GM12878 (cell line): ENCODE measurements at regions of chr5 and their contacts with region 1.

Region 1: DNA sequence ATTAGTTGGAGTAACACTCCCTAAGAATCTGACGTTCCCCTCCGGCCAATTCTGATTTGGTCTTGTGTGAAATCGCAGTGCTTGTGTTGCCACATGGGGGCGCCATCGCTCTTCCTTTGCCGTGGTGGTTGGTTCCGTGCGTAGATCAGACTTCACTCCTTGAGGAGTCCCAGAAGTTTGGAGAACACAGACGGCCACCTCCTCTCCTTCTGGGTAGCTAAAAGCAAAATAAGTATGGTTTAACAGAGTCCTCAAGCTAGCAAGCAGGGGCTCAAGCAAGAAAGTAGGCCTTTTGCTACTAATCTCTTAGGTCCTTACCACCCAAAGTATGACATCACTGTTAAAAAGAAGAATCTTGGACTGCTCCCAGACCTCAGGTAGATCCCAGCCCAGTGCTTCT is 59.5 kb downstream of the HSPA4 start:
- DNase-seq: peak; percentile 45
- ATAC-seq: peak; percentile 84
- H3K4me3 ChIP-seq: no peak overlapping the region
- H3K27ac ChIP-seq: no peak overlapping the region
- H3K4me1 ChIP-seq: peaks cover 14% of the 10 kb centered on the region
- H3K27me3 ChIP-seq: no peaks in the 10 kb centered on the region
- CTCF ChIP-seq: peak; percentile 88 to 99 (median 92); a peak in 5 of 6 replicates
- EP300 ChIP-seq: no peak
- POLR2A ChIP-seq: no peak
- RAD21 ChIP-seq: peak; percentile 99

Region 2: GRCh38 chr5:133041910-133042309 is 69.4 kb before region 1 on chr5:
- CTCF ChIA-PET with region 1: no interaction called
- POLR2A ChIA-PET with region 1: no interaction called
- RAD21 ChIA-PET with region 1: no interaction called
- SMC1A ChIA-PET with region 1: no interaction called
- in situ Hi-C with region 1: no loop called
- intact Hi-C with region 1: no loop called
- DNase-seq: no peak
- ATAC-seq: no peak
- H3K4me3 ChIP-seq: no peak overlapping the region
- H3K27ac ChIP-seq: no peak overlapping the region
- H3K4me1 ChIP-seq: no peaks in the 10 kb centered on the region
- H3K27me3 ChIP-seq: no peaks in the 10 kb centered on the region
- CTCF ChIP-seq: no peak
- EP300 ChIP-seq: no peak
- POLR2A ChIP-seq: no peak
- RAD21 ChIP-seq: no peak

Region 3: DNA sequence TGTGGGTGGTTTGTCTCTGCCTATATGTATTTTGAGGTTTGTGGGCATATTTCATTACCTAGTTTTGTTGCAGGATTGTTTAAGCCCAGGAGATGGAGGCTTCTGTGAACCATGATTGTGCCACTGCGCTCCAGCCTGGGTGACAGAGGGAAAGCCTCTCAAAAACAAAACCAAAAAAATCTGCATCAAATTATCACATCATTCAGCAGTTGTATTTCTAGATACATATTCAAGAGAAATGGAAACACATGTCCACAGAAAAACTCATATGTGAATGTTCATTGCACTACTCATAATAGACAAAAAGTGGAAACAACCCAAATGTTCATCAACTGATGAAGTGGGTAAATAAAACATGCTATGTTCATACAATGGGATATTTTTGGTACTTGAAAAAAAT is 29.6 kb before region 1 on chr5:
- CTCF ChIA-PET with region 1: no interaction called
- POLR2A ChIA-PET with region 1: no interaction called
- RAD21 ChIA-PET with region 1: no interaction called
- SMC1A ChIA-PET with region 1: no interaction called
- in situ Hi-C with region 1: no loop called
- intact Hi-C with region 1: no loop called
- DNase-seq: no peak
- ATAC-seq: no peak
- H3K4me3 ChIP-seq: no peak overlapping the region
- H3K27ac ChIP-seq: no peak overlapping the region
- H3K4me1 ChIP-seq: no peaks in the 10 kb centered on the region
- H3K27me3 ChIP-seq: no peaks in the 10 kb centered on the region
- CTCF ChIP-seq: no peak
- EP300 ChIP-seq: no peak
- POLR2A ChIP-seq: no peak
- RAD21 ChIP-seq: no peak

Region 4: DNA sequence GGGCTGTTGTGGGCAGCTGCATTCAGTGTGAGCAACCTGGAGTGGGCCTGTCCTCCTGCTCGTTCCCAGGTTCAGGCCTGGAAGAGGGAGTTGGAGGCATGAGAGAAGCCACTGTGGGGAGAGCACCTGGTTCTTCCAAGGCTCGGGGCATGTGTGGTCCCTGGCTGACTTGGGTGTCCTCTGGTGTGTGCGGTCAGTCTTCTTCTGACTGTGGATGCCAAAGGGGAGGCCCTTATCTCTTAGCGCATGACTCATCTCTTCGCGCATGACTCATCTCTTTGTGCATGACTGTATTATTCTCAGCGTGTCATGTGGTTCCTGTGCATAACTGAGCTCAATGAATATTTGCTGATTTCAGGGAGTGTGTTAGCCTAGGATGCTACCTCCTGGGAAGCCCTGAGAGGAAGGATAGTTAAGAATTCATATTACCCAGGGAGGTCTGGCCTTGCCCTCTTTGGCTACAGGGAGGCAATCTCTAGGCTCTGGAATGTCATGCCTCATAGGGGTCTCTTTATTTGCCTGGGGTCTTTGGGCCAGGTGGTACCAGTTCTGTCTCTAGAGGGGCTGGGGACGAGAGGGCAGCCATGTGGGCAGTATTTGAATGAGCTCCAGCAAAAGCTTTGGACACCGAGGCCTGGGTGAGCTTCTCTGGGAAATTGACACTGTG is 129.3 kb after region 1 on chr5:
- CTCF ChIA-PET with region 1: interaction called, 9 read pairs
- POLR2A ChIA-PET with region 1: interaction called, 10 read pairs
- RAD21 ChIA-PET with region 1: interaction called, 7 read pairs
- SMC1A ChIA-PET with region 1: interaction called, 8 read pairs
- in situ Hi-C with region 1: no loop called
- intact Hi-C with region 1: loop called (anchors 5 kb)
- DNase-seq: peak; percentile 76
- ATAC-seq: peak; percentile 83
- H3K4me3 ChIP-seq: no peak overlapping the region
- H3K27ac ChIP-seq: peak overlapping the region; percentile 58
- H3K4me1 ChIP-seq: peaks cover 44% of the 10 kb centered on the region
- H3K27me3 ChIP-seq: no peaks in the 10 kb centered on the region
- CTCF ChIP-seq: no peak
- EP300 ChIP-seq: peak; percentile 82 to 94; a peak in 2 of 4 replicates
- POLR2A ChIP-seq: peak; percentile 41; the same call in 1 of the 2 replicates
- RAD21 ChIP-seq: no peak

Region 5: DNA sequence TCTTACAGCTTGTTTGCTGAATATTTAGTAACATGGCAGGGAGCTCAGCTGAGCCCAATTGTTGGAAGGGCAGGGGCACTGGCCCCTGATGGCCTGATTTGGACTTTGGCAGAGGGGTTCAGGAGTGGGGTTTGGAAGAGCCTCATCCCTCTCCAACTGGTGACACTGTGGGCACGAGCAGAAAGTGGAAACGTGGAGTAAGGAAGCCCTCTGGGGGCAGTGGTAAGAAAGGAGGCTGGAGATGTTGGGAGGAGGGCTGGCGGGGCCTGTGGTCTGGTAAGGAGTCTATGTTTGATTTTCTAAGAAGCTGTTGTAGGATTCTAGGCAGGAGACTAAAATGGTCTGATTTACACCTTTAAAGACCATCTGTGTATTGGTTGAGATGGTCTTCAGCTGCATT is 149.4 kb after region 1 on chr5:
- CTCF ChIA-PET with region 1: interaction called, 8 read pairs
- POLR2A ChIA-PET with region 1: no interaction called
- RAD21 ChIA-PET with region 1: interaction called, 5 read pairs
- SMC1A ChIA-PET with region 1: interaction called, 3 read pairs
- in situ Hi-C with region 1: no loop called
- intact Hi-C with region 1: loop called (anchors 5 kb)
- DNase-seq: no peak
- ATAC-seq: no peak
- H3K4me3 ChIP-seq: no peak overlapping the region
- H3K27ac ChIP-seq: no peak overlapping the region
- H3K4me1 ChIP-seq: 0 out of 2 replicates have a peak, but pooled peaks cover 2% of the 10 kb centered on the region
- H3K27me3 ChIP-seq: no peaks in the 10 kb centered on the region
- CTCF ChIP-seq: peak in 2 of 3 experiments; percentile 2 to 26; a peak in 1 of 6 replicates
- EP300 ChIP-seq: no peak
- POLR2A ChIP-seq: no peak
- RAD21 ChIP-seq: peak; percentile 52

Region 6: GRCh38 chr5:133321833-133322420 is 210.6 kb after region 1 on chr5:
- CTCF ChIA-PET with region 1: interaction called, 3 read pairs
- POLR2A ChIA-PET with region 1: no interaction called
- RAD21 ChIA-PET with region 1: interaction called, 6 read pairs
- SMC1A ChIA-PET with region 1: interaction called, 10 read pairs
- in situ Hi-C with region 1: no loop called
- intact Hi-C with region 1: no loop called
- DNase-seq: peak; percentile 79
- ATAC-seq: peak; percentile 86
- H3K4me3 ChIP-seq: no peak overlapping the region
- H3K27ac ChIP-seq: peak overlapping the region; percentile 63
- H3K4me1 ChIP-seq: peaks cover 34% of the 10 kb centered on the region
- H3K27me3 ChIP-seq: no peaks in the 10 kb centered on the region
- CTCF ChIP-seq: no peak
- EP300 ChIP-seq: peak in 1 of 2 experiments; percentile 84; a peak in 3 of 4 replicates
- POLR2A ChIP-seq: no peak
- RAD21 ChIP-seq: no peak

Region 7: GRCh38 chr5:133423618-133424282 is 312.5 kb after region 1 on chr5:
- CTCF ChIA-PET with region 1: interaction called, 18 read pairs
- POLR2A ChIA-PET with region 1: no interaction called
- RAD21 ChIA-PET with region 1: interaction called, 5 read pairs
- SMC1A ChIA-PET with region 1: interaction called, 7 read pairs
- in situ Hi-C with region 1: no loop called
- intact Hi-C with region 1: loop called (anchors 5 kb)
- DNase-seq: peak; percentile 16
- ATAC-seq: peak; percentile 92
- H3K4me3 ChIP-seq: no peak overlapping the region
- H3K27ac ChIP-seq: no peak overlapping the region
- H3K4me1 ChIP-seq: 0 out of 2 replicates have a peak, but pooled peaks cover 4% of the 10 kb centered on the region
- H3K27me3 ChIP-seq: peaks cover 3% of the 10 kb centered on the region in 2 experiments; a peak in 1 of 4 replicates
- CTCF ChIP-seq: peak; percentile 87 to 93 (median 91)
- EP300 ChIP-seq: no peak
- POLR2A ChIP-seq: no peak
- RAD21 ChIP-seq: peak; percentile 65

Region 8: GRCh38 chr5:133944263-133945185 is 833.2 kb after region 1 on chr5:
- CTCF ChIA-PET with region 1: interaction called, 10 read pairs
- POLR2A ChIA-PET with region 1: no interaction called
- RAD21 ChIA-PET with region 1: no interaction called
- SMC1A ChIA-PET with region 1: interaction called, 3 read pairs
- in situ Hi-C with region 1: loop called (anchors 5 kb)
- intact Hi-C with region 1: no loop called
- DNase-seq: no peak
- ATAC-seq: peak; percentile 94
- H3K4me3 ChIP-seq: no peak overlapping the region
- H3K27ac ChIP-seq: no peak overlapping the region
- H3K4me1 ChIP-seq: peaks cover 3% of the 10 kb centered on the region
- H3K27me3 ChIP-seq: no peaks in the 10 kb centered on the region
- CTCF ChIP-seq: peak; percentile 74 to 84 (median 75)
- EP300 ChIP-seq: no peak
- POLR2A ChIP-seq: no peak
- RAD21 ChIP-seq: peak; percentile 92